GM12878 (cell line): ENCODE measurements at regions of chr7 and their contacts with region 1.

Region 1: GRCh38 chr7:93715234-93715633 is 140.7 kb upstream of the CALCR start:
- DNase-seq: no peak
- ATAC-seq: peak; percentile 56; the same call in 2 of the 3 replicates
- H3K4me3 ChIP-seq: no peak overlapping the region
- H3K27ac ChIP-seq: no peak overlapping the region
- H3K4me1 ChIP-seq: no peaks in the 10 kb centered on the region
- H3K27me3 ChIP-seq: no peaks in the 10 kb centered on the region; a peak in 1 of 4 replicates
- CTCF ChIP-seq: peak; percentile 38 to 48 (median 47)
- EP300 ChIP-seq: no peak
- POLR2A ChIP-seq: no peak
- RAD21 ChIP-seq: peak; percentile 76

Region 2: DNA sequence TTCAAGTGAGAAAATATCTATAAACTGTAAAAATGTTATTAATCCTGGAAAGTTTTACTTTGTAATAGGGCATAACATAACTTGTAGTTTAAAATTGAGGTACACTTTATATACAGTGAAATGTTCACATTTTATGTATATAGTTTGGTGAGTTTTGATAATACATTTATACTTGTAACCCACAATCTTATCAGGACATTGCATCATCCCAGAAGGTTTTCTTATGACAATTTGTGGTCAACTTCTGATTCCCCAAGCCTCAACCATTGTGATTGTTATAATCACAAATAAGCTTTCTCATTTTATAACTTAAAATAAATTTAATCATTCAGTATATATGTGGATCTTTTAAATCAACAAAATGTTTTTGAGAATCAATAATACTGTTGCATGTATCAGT is 24.2 kb after region 1 on chr7:
- CTCF ChIA-PET with region 1: no interaction called
- POLR2A ChIA-PET with region 1: no interaction called
- RAD21 ChIA-PET with region 1: no interaction called
- SMC1A ChIA-PET with region 1: no interaction called
- in situ Hi-C with region 1: no loop called
- intact Hi-C with region 1: no loop called
- DNase-seq: no peak
- ATAC-seq: no peak
- H3K4me3 ChIP-seq: no peak overlapping the region
- H3K27ac ChIP-seq: no peak overlapping the region
- H3K4me1 ChIP-seq: no peaks in the 10 kb centered on the region
- H3K27me3 ChIP-seq: no peaks in the 10 kb centered on the region; a peak in 1 of 4 replicates
- CTCF ChIP-seq: no peak
- EP300 ChIP-seq: no peak
- POLR2A ChIP-seq: no peak
- RAD21 ChIP-seq: no peak

Region 3: DNA sequence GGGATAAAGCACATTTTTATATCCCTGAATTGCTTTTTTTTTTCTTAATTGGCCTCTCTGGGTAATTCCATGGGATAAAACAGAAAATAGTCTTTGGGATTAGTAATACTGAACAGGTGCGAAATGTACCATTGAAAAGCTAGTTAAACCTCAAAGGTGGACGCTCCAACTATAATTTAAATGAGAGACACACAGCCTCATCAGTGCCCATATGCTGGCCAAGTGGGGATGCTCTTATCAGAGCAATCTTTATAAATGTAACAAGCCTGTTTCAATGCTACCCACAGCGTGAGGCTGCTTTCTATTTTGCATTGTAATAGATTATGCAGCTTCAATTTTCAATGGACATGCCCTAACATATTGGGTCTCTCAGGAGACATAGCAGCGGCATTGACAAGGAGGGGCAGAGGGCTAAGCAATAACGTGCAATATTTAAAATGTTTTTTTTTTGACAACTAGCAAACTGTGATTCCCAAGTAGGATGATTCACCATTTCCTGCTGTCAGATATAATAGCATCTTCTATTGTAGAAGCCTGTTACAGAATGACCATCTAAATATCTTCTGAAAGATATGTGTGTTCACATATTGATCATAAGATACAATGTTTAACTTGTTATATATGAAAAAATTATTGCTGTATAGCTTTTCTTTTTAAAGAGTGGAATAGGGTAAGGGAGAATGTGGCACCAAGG is 380.2 kb after region 1 on chr7:
- CTCF ChIA-PET with region 1: no interaction called
- POLR2A ChIA-PET with region 1: no interaction called
- RAD21 ChIA-PET with region 1: no interaction called
- SMC1A ChIA-PET with region 1: no interaction called
- in situ Hi-C with region 1: no loop called
- intact Hi-C with region 1: loop called (anchors 10 kb)
- DNase-seq: no peak
- ATAC-seq: no peak
- H3K4me3 ChIP-seq: no peak overlapping the region
- H3K27ac ChIP-seq: no peak overlapping the region
- H3K4me1 ChIP-seq: no peaks in the 10 kb centered on the region
- H3K27me3 ChIP-seq: no peaks in the 10 kb centered on the region; a peak in 2 of 4 replicates
- CTCF ChIP-seq: no peak
- EP300 ChIP-seq: no peak
- POLR2A ChIP-seq: no peak
- RAD21 ChIP-seq: no peak

Region 4: GRCh38 chr7:94289071-94289470 is 573.8 kb after region 1 on chr7:
- CTCF ChIA-PET with region 1: no interaction called
- POLR2A ChIA-PET with region 1: no interaction called
- RAD21 ChIA-PET with region 1: no interaction called
- SMC1A ChIA-PET with region 1: no interaction called
- in situ Hi-C with region 1: no loop called
- intact Hi-C with region 1: loop called (anchors 5 kb)
- DNase-seq: no peak
- ATAC-seq: no peak
- H3K4me3 ChIP-seq: no peak overlapping the region
- H3K27ac ChIP-seq: no peak overlapping the region
- H3K4me1 ChIP-seq: no peaks in the 10 kb centered on the region
- H3K27me3 ChIP-seq: no peaks in the 10 kb centered on the region; a peak in 1 of 4 replicates
- CTCF ChIP-seq: peak; percentile 26 to 46 (median 30); a peak in 4 of 6 replicates
- EP300 ChIP-seq: no peak
- POLR2A ChIP-seq: no peak
- RAD21 ChIP-seq: peak; percentile 44; the same call in 1 of the 2 replicates

Region 5: DNA sequence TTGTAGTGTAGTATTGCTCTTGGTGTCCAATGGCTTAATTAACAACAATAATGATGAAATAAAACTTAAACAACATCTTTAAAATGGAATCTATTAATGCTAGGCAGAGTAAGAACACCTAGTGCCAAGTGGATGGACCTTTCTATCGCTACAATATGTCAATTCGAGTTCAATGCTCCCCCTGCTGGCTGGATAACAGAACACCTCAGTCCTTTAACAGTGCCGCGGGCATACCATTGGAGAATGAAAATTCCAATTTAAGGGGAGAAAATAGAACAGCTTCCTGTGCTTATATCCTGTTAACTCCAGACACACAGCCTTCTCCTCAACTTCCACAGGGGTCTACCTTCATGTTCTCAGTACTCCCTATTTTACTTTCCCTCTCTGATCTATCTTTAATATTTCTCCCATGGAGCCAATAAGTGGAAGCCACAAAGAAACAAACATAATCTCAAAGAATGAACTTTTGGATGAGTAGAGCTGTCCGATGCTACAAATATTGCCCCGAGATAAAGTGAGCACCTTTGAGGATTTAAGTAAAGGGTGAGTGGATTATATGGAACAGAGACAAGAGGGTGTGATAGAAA is 720.9 kb after region 1 on chr7:
- CTCF ChIA-PET with region 1: interaction called, 3 read pairs
- POLR2A ChIA-PET with region 1: no interaction called
- RAD21 ChIA-PET with region 1: no interaction called
- SMC1A ChIA-PET with region 1: interaction called, 3 read pairs
- in situ Hi-C with region 1: no loop called
- intact Hi-C with region 1: loop called (anchors 5 kb)
- DNase-seq: peak; percentile 7
- ATAC-seq: peak; percentile 98
- H3K4me3 ChIP-seq: no peak overlapping the region
- H3K27ac ChIP-seq: no peak overlapping the region
- H3K4me1 ChIP-seq: no peaks in the 10 kb centered on the region
- H3K27me3 ChIP-seq: no peaks in the 10 kb centered on the region; a peak in 1 of 4 replicates
- CTCF ChIP-seq: peak; percentile 75 to 83 (median 76); a peak in 5 of 6 replicates
- EP300 ChIP-seq: no peak
- POLR2A ChIP-seq: no peak
- RAD21 ChIP-seq: peak; percentile 58